Left cardiac atrium (tissue), 4 donors: ENCODE measurements at regions of chr3 and their contacts with region 1.

Region 1: DNA sequence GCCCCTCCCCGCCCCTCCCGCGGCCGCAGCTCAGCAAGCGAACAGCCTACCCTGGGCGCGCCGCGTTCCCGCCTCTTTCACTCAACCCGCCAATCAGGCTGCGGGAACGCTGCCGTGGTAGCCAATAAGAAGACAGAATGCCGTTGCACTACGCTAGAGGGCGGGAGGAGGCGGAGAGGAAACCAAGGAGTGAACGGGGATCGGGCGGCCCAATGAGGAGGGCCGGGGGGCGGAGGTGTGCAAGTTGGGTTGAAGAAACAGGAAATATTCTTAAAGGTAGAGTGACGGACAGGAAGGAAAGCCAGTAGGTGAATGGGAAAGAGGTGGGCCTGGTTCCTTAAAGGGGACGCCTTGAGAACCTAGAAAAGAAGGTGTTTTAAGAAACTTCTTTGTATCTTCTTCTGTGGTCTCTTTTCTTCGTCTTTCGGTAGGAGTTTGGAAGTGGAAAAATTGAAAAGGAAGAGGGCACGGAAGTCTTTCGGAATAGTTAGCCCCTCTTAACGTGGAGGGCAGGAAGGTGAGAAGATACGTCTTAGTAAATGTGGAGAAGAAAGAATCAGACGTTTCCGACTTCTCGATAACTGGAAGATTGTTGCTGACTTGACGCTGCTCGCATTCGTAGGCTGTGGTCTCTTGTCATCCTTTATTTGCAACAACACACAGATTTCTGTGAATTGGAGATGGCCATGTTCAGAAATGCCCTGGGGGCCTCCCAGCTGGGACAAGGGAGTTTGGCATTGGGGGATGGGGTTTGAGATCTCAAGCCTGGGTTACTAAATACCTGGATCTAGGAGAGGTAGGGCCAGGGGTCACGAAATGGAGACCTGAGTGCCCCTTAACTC is 437 bp upstream of the USF3 start:
- DNase-seq: peak; percentile 99
- ATAC-seq: peak; percentile 97

Region 2: GRCh38 chr3:113745273-113746068 is 48.6 kb after region 1 on chr3:
- intact Hi-C with region 1: loop called in 1 of 2 experiments (anchors 5 kb)
- DNase-seq: peak; percentile 64
- ATAC-seq: peak; percentile 67 to 78